ENCODE measurements at regions of chr1 and their contacts with region 1.

Region 1: GRCh38 chr1:184805667-184806295 is 51.1 kb upstream of the EDEM3 start:
- DNase-seq: peak; percentile 79
- CTCF ChIP-seq: peak; percentile 98

Region 2: DNA sequence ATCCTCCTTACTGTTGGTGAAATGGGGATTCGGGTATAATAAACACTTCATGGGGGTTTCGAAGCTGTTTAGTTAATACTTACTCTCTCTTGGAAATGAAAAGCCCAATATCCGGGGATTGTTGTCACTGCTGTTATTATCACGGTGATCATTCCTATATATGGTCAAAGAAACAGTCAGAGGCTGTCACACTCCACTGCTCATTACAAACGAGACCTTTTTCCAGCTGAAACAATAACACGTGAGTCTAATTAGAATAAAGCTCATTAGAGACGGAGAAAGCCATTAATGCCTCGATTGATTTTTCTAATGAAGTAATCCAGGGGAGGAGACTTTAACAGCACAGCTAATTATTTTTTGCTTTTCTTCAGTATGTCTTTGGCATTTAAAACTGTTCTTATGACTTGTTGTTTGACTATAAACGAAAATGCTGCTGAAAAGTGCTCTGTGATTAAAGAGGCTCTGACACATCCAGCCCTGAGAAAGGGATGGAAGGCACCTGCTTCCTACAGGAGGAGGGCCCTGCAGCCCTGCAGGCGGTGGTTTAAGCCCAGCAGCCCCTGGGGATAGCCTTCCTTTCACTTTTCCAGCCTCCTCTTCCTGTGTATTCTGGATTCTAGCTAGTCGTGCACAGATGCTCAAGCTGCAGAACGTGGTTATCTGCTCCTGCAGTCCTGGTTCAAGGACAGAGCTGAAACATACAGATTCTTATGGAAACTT is 194.7 kb before region 1 on chr1:
- CTCF ChIA-PET with region 1: no interaction called
- POLR2A ChIA-PET with region 1: no interaction called
- DNase-seq: no peak
- CTCF ChIP-seq: no peak

Region 3: DNA sequence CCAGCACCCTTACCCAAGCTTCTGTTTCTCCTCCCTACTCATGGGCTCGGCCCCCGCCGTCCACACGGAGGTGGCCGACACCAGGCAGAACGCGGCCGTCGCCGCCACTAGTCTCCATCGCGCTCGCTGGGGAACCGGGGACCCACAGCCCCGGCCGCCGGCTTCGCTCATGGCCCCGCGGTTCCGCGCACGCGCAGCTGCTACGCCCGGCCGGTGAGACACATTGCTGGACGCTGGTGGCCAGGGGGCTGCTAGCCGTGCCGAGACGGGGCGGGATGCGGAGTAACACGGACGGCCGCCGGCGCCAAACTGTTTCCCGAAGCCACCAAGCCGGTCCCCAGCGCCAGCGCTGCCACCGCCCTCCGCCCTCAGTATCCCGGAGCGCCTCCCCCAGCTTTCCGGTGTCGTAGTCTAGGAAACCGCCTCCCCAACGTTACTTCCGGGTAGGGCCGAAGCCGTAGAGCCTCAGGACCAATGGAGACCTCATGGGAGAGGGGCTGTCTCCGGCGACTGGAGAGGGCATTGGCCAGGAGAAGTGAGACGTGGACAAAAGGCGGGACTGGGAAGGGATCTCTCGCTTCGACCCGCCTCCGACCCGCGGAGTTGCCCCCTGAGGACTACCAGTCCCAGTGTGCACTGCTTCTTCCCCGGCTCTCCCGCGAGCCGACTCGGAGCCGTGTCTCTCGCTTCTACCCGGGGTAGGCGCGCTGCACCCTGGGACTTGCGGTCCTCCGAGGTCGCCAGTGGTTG is 51.1 kb before region 1 on chr1 and contains the start of gene EDEM3:
- CTCF ChIA-PET with region 1: interaction called, 12 read pairs
- POLR2A ChIA-PET with region 1: no interaction called
- DNase-seq: peak; percentile 97
- CTCF ChIP-seq: no peak

Region 4: DNA sequence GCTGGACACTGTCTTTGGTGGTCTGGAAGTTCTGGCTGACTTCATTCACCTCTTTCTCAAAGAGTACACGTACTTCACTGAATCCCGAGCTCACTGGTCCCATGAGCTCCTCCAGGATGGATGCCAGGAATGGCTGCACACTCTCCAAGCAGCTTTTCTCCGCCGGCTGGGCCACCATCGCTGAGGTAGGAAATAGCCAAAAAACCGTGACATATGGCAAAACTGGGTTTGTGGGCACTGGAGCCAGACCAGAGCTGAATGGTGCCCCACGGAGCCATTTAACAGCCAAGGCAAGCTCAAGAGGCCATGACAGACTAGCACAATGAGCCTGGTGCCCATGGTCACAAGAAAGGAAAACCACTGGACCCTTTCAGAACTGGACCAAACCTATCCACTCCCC is 12.9 kb after region 1 on chr1:
- CTCF ChIA-PET with region 1: interaction called, 42 read pairs
- POLR2A ChIA-PET with region 1: no interaction called
- DNase-seq: no peak
- CTCF ChIP-seq: no peak

Region 5: DNA sequence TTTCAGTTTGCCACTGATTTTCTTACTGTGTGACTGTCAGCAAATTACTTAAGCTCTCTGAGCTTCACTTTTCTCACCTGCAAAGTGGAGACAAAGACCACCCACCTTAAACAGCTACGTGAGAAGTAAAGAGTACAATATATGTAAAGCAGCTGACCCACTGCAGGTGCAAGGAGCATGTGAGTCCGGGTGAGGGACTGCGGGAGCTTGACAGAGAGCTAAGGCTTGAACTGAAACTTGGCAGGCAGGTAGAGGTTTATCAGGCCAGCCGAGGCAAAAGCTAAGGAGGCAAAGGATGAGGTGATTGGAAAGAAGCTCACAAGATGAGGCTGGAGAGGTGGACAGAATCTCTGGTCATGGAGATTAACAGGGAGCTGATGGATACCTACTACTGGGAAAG is 131.9 kb after region 1 on chr1:
- CTCF ChIA-PET with region 1: interaction called, 12 read pairs
- POLR2A ChIA-PET with region 1: no interaction called
- DNase-seq: no peak
- CTCF ChIP-seq: no peak

Region 6: GRCh38 chr1:184973272-184974055 is 167.7 kb after region 1 on chr1:
- CTCF ChIA-PET with region 1: interaction called, 98 read pairs
- POLR2A ChIA-PET with region 1: interaction called, 3 read pairs
- DNase-seq: peak; percentile 70
- CTCF ChIP-seq: no peak

Region 7: DNA sequence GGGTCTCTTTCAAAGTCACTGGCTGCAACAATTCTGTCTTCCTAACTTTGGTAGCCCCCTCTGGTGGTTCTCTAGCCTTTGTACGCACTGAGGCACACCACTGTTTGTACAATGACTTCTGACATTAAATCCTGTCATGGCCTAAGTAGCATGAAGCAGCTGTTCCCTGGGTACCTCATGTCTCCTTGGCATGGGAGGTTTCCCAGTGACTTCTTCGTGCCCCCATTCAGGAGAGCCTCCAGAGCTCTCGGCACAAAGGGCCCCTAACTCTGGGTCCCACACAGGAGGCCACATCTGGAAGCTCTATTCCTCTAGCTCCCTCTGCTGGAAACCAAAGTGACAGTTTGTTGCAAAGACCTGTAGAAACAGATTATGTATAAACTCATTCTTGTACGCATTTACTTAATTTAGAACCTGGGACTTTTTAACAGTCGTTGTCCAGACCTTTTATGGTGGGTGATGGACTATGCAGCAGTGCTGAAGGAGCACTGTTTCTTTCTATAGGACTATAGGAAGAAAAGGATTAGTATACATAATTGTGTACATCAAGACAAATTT is 364.6 kb after region 1 on chr1:
- CTCF ChIA-PET with region 1: interaction called, 37 read pairs
- POLR2A ChIA-PET with region 1: no interaction called
- DNase-seq: peak; percentile 68
- CTCF ChIP-seq: peak; percentile 69